Activated CD8-positive, alpha-beta T cell treated with anti-CD3 and anti-CD28 coated beads for 36 hours (primary cell): ENCODE measurements at regions of chr6 and their contacts with region 1.

Region 1: GRCh38 chr6:133923938-133924593 is 29.0 kb upstream of the TBPL1 start:
- DNase-seq: peak; percentile 76
- ATAC-seq: peak; percentile 82
- H3K4me3 Mint-ChIP-seq: no peak overlapping the region
- H3K27ac Mint-ChIP-seq: no peak overlapping the region
- H3K4me1 Mint-ChIP-seq: no peaks in the 10 kb centered on the region
- H3K27me3 Mint-ChIP-seq: peaks cover 20% of the 10 kb centered on the region
- CTCF ChIP-seq: peak; percentile 89

Region 2: DNA sequence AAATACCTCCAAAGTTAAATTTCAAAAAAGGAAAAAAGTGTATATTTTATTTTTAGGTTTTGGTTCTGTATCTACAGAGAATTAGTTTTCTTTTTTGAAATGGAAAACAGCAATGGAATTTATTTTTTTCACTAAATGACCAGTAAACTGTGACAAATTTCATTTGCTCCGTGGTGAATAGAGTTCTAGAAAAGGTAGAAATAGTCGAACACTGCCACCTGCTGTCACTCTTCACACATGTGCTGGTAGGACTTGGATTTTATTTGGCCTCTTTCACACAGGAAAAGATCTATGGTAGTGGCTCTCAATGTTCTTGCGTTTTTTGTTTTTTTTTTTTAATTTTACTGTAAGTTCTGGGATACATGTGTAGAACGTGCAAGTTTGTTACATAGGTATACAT is 370.4 kb before region 1 on chr6:
- CTCF ChIA-PET with region 1: no interaction called
- POLR2A ChIA-PET with region 1: no interaction called
- intact Hi-C with region 1: no loop called
- DNase-seq: peak; percentile 58
- ATAC-seq: no peak
- H3K4me3 Mint-ChIP-seq: no peak overlapping the region
- H3K27ac Mint-ChIP-seq: no peak overlapping the region
- H3K4me1 Mint-ChIP-seq: no peaks in the 10 kb centered on the region
- H3K27me3 Mint-ChIP-seq: peaks cover 2% of the 10 kb centered on the region
- CTCF ChIP-seq: peak; percentile 56

Region 3: GRCh38 chr6:133817460-133818047 is 106.5 kb before region 1 on chr6:
- CTCF ChIA-PET with region 1: interaction called, 10 read pairs
- POLR2A ChIA-PET with region 1: no interaction called
- intact Hi-C with region 1: no loop called
- DNase-seq: peak; percentile 62
- ATAC-seq: peak; percentile 64
- H3K4me3 Mint-ChIP-seq: no peak overlapping the region
- H3K27ac Mint-ChIP-seq: no peak overlapping the region
- H3K4me1 Mint-ChIP-seq: peaks cover 5% of the 10 kb centered on the region
- H3K27me3 Mint-ChIP-seq: peaks cover 9% of the 10 kb centered on the region
- CTCF ChIP-seq: peak; percentile 93

Region 4: DNA sequence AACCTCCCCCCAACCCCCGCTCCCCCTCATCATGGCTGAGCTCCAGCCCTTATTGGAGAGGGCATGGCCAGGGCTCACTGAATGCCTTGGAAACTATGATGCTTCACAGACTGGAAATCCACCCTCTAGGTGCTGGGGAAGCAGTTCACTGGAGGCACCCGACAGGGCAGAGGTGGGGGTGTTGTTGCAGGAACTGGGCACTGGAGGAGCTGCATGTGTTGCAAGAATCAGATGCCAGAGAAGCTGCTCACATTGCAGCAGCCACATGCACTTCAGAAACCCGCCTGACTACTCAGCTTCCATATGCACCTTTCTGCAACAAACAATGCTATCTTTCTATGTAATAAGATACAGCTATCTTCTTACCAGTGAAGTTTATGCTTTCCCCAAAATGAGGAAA is 21.1 kb after region 1 on chr6:
- CTCF ChIA-PET with region 1: interaction called, 20 read pairs
- POLR2A ChIA-PET with region 1: no interaction called
- intact Hi-C with region 1: no loop called
- DNase-seq: no peak
- ATAC-seq: no peak
- H3K4me3 Mint-ChIP-seq: no peak overlapping the region
- H3K27ac Mint-ChIP-seq: no peak overlapping the region
- H3K4me1 Mint-ChIP-seq: no peaks in the 10 kb centered on the region
- H3K27me3 Mint-ChIP-seq: peaks cover 6% of the 10 kb centered on the region
- CTCF ChIP-seq: no peak

Region 5: GRCh38 chr6:133973109-133973971 is 49.3 kb after region 1 on chr6:
- CTCF ChIA-PET with region 1: interaction called, 86 read pairs
- POLR2A ChIA-PET with region 1: no interaction called
- intact Hi-C with region 1: no loop called
- DNase-seq: no peak
- ATAC-seq: peak; percentile 78
- H3K4me3 Mint-ChIP-seq: no peak overlapping the region
- H3K27ac Mint-ChIP-seq: peak overlapping the region; percentile 52
- H3K4me1 Mint-ChIP-seq: peaks cover 50% of the 10 kb centered on the region
- H3K27me3 Mint-ChIP-seq: no peaks in the 10 kb centered on the region
- CTCF ChIP-seq: peak; percentile 89

Region 6: DNA sequence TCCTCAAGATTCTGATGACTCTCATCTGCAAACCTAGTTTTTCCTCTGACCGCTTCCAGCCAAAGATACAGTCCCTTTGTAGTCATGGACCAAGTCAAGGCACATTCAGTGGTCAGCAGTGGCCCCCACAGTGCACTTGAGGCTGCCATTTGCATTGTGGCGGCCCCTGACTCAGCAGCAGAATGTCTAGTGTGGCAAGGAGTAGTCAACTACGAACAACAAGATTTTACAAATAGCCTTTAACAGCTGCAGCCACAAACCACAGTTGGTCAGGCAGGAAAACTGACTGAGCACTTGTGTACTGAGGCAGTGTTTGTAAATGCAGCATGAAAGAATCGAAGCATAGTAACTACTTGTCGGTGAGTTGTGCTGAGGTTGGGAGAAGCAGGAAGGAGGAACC is 78.8 kb after region 1 on chr6:
- CTCF ChIA-PET with region 1: interaction called, 20 read pairs
- POLR2A ChIA-PET with region 1: no interaction called
- intact Hi-C with region 1: no loop called
- DNase-seq: no peak
- ATAC-seq: no peak
- H3K4me3 Mint-ChIP-seq: no peak overlapping the region
- H3K27ac Mint-ChIP-seq: no peak overlapping the region
- H3K4me1 Mint-ChIP-seq: no peaks in the 10 kb centered on the region
- H3K27me3 Mint-ChIP-seq: peaks cover 10% of the 10 kb centered on the region
- CTCF ChIP-seq: no peak

Region 7: GRCh38 chr6:134063966-134064445 is 139.9 kb after region 1 on chr6:
- CTCF ChIA-PET with region 1: interaction called, 193 read pairs
- POLR2A ChIA-PET with region 1: interaction called, 6 read pairs
- intact Hi-C with region 1: loop called (anchors 1 kb)
- DNase-seq: peak; percentile 65
- ATAC-seq: peak; percentile 94
- H3K4me3 Mint-ChIP-seq: no peak overlapping the region
- H3K27ac Mint-ChIP-seq: no peak overlapping the region
- H3K4me1 Mint-ChIP-seq: no peaks in the 10 kb centered on the region
- H3K27me3 Mint-ChIP-seq: no peaks in the 10 kb centered on the region
- CTCF ChIP-seq: peak; percentile 84

Region 8: DNA sequence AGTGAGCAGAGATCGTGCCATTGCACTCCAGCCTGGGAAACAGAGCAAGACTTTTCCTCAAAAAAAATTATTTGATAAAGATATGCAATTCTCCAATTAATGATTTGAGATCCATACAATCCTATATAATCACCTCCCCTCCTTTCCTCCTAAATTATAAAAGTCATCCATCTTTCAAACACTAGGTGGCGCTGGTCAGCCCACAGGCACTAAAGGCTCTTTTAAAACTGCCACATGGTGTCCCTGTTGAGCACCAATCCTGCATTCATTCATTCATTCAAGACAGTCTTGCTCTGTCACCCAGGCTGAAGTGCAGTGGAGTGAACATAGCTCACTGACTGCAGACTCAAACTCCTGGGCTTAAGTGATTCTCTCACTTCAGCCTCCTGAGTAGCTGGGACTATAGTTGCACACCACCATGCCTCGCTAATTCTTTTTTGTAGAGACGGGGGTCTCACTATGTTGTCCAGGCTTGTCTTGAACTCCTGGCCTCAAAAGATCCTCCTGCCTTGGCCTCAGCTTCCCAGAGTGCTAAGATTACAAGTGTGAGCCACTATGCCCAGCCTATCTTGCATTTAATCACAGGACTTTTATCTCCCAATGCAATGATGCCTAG is 187.1 kb after region 1 on chr6:
- CTCF ChIA-PET with region 1: interaction called, 410 read pairs
- POLR2A ChIA-PET with region 1: no interaction called
- intact Hi-C with region 1: no loop called
- DNase-seq: peak; percentile 66
- ATAC-seq: peak; percentile 85
- H3K4me3 Mint-ChIP-seq: no peak overlapping the region
- H3K27ac Mint-ChIP-seq: no peak overlapping the region
- H3K4me1 Mint-ChIP-seq: peaks cover 4% of the 10 kb centered on the region
- H3K27me3 Mint-ChIP-seq: peaks cover 7% of the 10 kb centered on the region
- CTCF ChIP-seq: peak; percentile 88